ENCODE measurements at regions of chr9 and their contacts with region 1.

Region 1: GRCh38 chr9:83334320-83334719 is 203.9 kb downstream of the FRMD3 start:
- DNase-seq: no peak
- CTCF ChIP-seq: peak; percentile 85

Region 2: DNA sequence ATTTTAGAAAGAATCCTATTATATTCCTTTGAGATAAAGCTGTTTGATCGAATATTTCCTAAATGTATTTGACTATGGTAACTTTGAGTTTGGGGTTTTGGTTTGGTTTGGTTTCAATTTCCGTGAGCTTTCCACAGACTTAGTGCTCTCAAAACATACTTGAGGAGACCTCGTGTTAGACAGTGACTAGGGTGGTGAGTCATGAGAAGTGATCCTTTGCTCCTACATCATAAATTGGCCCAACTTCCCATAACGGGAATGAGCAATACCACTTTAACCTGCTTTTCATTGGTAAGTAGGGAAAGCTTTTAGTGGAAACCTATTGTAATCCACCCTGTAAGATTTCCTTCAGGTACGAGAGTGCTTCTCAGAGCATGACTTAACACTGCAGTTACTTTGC is 267.5 kb before region 1 on chr9:
- in situ Hi-C with region 1: no loop called
- DNase-seq: no peak
- CTCF ChIP-seq: no peak

Region 3: GRCh38 chr9:83544002-83544698 is 209.8 kb after region 1 on chr9:
- in situ Hi-C with region 1: loop called (anchors 10 kb)
- DNase-seq: peak; percentile 69
- CTCF ChIP-seq: peak; percentile 79

Region 4: GRCh38 chr9:83920927-83921707 is 586.8 kb after region 1 on chr9 and contains the start of gene KIF27:
- in situ Hi-C with region 1: loop called (anchors 25 kb)
- DNase-seq: peak; percentile 95
- CTCF ChIP-seq: peak; percentile 39

Region 5: GRCh38 chr9:83965350-83966208 is 631.3 kb after region 1 on chr9:
- in situ Hi-C with region 1: no loop called
- DNase-seq: no peak
- CTCF ChIP-seq: no peak